Aorta (tissue), 5 donors: ENCODE measurements at regions of chr15 and their contacts with region 1.

Region 1: GRCh38 chr15:74127260-74127953 is 3.0 kb upstream of the ISLR2 start:
- DNase-seq: peak; percentile 92 to 97
- ATAC-seq: peak; percentile 95
- H3K4me3 ChIP-seq: no peak overlapping the region
- H3K27ac ChIP-seq: no peak overlapping the region
- H3K4me1 ChIP-seq: no peaks in the 10 kb centered on the region
- H3K27me3 ChIP-seq: peaks cover 0 to 4% of the 10 kb centered on the region in 2 donors

Region 2: GRCh38 chr15:74053941-74054529 is 73.4 kb before region 1 on chr15:
- intact Hi-C with region 1: loop called (anchors 2 to 5 kb)
- DNase-seq: peak; percentile 87 to 91
- ATAC-seq: peak; percentile 86
- H3K4me3 ChIP-seq: no peak overlapping the region
- H3K27ac ChIP-seq: no peak overlapping the region
- H3K4me1 ChIP-seq: peaks cover 0 to 2% of the 10 kb centered on the region in 2 donors
- H3K27me3 ChIP-seq: no peaks in the 10 kb centered on the region

Region 3: DNA sequence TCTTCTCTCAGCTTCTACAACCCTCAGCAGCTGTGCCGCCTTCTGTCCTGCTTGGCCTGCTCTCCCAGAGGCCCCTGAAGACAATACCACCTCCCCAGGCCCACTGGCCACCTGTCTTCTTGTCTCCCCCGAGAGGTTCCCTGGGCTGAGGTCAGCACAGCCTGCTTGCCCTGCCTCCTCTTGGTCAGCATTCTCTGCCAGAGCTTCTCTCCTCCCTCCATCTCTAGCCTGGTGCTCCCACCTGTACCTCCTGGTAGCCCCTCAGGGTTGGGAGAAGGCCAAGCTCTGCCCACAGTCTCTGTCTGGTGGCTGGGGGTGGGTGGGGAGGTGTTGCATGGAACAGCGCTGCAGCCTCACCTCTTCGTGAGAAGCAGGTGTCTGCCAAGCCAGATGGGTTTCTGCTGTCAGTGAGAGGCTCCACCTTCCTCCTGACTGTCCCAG is 40.5 kb after region 1 on chr15:
- intact Hi-C with region 1: no loop called
- DNase-seq: peak in 1 of 2 donors; percentile 47
- ATAC-seq: no peak
- H3K4me3 ChIP-seq: no peak overlapping the region
- H3K27ac ChIP-seq: no peak overlapping the region
- H3K4me1 ChIP-seq: no peaks in the 10 kb centered on the region
- H3K27me3 ChIP-seq: no peaks in the 10 kb centered on the region

Region 4: DNA sequence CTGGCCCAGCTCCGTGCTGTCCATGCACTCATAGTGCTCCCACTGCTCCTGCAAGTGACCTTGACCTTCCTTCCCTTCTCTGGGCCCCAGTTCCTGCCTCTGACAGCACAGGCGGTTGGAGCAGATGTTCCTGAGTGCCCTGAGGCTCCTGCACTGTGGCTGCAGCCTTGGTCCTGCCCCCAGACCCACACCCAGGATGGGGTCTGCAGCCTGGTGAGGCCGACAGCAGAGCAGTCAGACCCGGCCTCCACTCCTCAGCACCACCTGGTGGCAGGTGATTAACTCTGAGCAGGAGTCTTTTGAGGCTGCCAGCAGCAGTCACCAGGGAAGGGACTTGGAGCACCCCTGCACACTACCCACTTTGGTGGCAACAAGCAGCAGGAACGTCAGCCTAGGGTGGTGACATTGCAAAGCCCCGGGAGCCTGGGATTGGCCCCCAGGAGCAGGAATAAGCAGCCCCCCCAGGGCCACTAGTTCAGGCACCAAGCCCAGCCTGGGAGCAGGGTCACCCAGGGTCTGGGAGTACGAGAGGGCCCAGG is 175.5 kb after region 1 on chr15:
- intact Hi-C with region 1: loop called (anchors 1 to 5 kb)
- DNase-seq: no peak
- ATAC-seq: no peak
- H3K4me3 ChIP-seq: no peak overlapping the region
- H3K27ac ChIP-seq: no peak overlapping the region
- H3K4me1 ChIP-seq: no peaks in the 10 kb centered on the region
- H3K27me3 ChIP-seq: no peaks in the 10 kb centered on the region

Region 5: DNA sequence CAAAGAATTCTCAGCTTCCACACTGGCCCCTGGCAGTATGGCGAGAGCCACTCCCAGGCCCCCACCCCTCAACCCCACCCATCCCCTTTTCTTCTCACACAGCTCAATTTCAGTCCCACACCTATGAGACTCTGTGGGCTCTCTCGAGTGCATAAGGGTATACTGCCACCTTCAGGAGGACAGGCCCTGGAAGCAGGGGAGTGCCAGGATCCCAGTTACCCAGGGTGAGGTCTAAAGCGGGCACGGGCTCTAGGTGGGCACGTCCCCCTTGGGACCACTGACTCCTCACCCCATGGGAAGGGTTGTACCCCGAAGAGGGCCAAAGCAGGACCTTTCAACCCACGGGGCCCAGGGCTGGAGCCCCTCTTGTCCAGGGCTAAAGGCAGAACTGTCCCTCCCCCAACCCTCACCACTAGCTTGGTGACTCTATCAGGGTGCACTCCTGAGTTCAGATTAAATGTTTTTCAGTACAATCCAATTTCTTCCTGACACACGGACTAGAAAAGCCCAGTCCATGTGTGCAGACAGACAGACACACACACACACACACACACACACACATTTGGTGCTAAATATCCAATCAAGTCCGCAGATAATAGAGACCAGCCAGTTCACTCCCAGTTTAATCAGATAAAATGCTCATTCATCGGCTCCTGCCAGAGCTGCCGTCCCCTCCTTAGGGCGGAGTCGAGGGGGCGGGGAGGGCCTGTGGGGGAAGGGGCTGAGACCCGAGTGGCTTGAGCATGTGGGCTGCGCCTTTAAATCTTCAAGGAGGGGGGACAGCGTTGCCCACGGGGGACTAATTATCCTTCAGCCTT is 180.6 kb after region 1 on chr15:
- intact Hi-C with region 1: loop called (anchors 1 to 5 kb)
- DNase-seq: peak in 1 of 2 donors; percentile 68
- ATAC-seq: peak; percentile 71
- H3K4me3 ChIP-seq: no peak overlapping the region
- H3K27ac ChIP-seq: no peak overlapping the region
- H3K4me1 ChIP-seq: no peaks in the 10 kb centered on the region
- H3K27me3 ChIP-seq: no peaks in the 10 kb centered on the region